Aorta (tissue), 5 donors: ENCODE measurements at regions of chr2 and their contacts with region 1.

Region 1: DNA sequence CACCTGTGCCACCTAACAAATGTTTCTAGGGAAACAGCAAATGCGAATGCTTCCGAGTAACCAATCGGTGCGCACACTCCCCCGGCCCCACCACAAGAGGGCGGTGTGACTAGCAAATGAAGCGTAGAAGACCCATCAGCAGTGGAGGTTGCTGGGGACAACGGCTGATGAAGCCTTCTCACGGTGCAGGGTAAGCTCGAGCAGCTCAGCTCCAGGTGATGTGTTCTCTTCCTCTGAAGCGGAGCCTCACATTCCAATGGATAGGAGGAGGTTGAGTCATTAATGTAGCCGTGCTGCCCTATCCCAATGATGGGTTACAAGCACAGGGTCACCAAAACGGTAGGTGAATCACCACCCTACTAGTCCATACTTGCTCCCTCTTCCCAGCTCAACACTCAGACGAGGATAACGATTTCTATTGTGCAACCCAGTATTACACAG is 127.6 kb upstream of the TWIST2 start:
- DNase-seq: peak; percentile 66 to 87
- ATAC-seq: no peak
- H3K4me3 ChIP-seq: no peak overlapping the region
- H3K27ac ChIP-seq: no peak overlapping the region
- H3K4me1 ChIP-seq: no peaks in the 10 kb centered on the region
- H3K27me3 ChIP-seq: no peaks in the 10 kb centered on the region

Region 2: GRCh38 chr2:238864207-238865014 is 144.2 kb after region 1 on chr2:
- intact Hi-C with region 1: loop called in 1 of 2 experiments (anchors 10 kb)
- DNase-seq: peak; percentile 93 to 95
- ATAC-seq: peak; percentile 92
- H3K4me3 ChIP-seq: no peak overlapping the region
- H3K27ac ChIP-seq: peak overlapping the region; percentile 69 to 89
- H3K4me1 ChIP-seq: no peaks in the 10 kb centered on the region
- H3K27me3 ChIP-seq: no peaks in the 10 kb centered on the region